ENCODE measurements at regions of chr10 and their contacts with region 1.

Region 1: DNA sequence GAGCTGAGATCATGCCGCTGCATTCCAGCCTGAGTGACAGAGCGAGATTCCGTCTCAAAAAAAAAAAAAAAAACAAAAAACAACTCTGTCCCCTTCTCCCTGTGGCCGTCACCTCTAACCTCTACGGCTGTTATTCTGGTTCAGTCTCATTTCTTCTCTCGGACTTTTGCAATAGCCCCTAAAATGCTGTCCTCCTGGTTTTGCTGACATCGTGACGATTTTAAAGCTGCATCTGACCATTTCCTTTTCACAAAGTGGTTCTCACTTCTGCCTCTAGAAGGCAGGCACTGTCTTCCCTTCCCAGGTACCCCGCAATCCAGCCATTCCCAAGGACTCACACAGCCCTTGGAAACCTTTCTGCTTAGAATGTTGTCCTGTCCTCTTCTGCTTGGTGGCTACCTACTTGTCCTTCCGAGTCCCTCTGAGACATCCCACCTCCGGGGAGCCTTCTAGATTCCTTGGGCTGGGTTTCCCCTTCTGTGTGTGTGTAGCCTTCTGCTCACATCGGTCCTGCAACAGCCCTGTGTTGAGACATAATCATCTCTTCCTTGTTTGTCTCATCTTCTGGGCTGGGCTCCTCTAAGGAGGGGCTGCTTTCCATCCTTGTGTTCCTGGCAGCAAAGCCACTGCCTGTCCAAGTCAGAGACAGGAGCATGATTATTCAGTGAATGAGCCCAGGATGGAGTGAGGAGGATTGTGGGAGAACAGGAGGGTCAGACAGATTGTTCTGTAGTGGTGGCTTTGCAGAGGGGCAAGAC is 83.1 kb downstream of the GRK5 start:
- DNase-seq: peak; percentile 48 to 62
- H3K4me3 ChIP-seq: no peak overlapping the region
- H3K4me3 Mint-ChIP-seq: no peak overlapping the region
- H3K27ac Mint-ChIP-seq: peak overlapping the region; percentile 37
- H3K4me1 ChIP-seq: peaks cover 19% of the 10 kb centered on the region
- H3K4me1 Mint-ChIP-seq: peaks cover 16% of the 10 kb centered on the region
- H3K27me3 ChIP-seq: no peaks in the 10 kb centered on the region
- H3K27me3 Mint-ChIP-seq: no peaks in the 10 kb centered on the region
- CTCF ChIP-seq: no peak

Region 2: GRCh38 chr10:119315128-119316001 is 24.9 kb after region 1 on chr10:
- CTCF ChIA-PET with region 1: no interaction called
- POLR2A ChIA-PET with region 1: interaction called, 6 read pairs
- intact Hi-C with region 1: loop called (anchors 2 kb)
- DNase-seq: peak; percentile 56 to 66
- H3K4me3 ChIP-seq: no peak overlapping the region
- H3K4me3 Mint-ChIP-seq: no peak overlapping the region
- H3K27ac Mint-ChIP-seq: peak overlapping the region; percentile 97
- H3K4me1 ChIP-seq: peaks cover 51% of the 10 kb centered on the region
- H3K4me1 Mint-ChIP-seq: peaks cover 48% of the 10 kb centered on the region
- H3K27me3 ChIP-seq: no peaks in the 10 kb centered on the region
- H3K27me3 Mint-ChIP-seq: no peaks in the 10 kb centered on the region
- CTCF ChIP-seq: no peak

Region 3: DNA sequence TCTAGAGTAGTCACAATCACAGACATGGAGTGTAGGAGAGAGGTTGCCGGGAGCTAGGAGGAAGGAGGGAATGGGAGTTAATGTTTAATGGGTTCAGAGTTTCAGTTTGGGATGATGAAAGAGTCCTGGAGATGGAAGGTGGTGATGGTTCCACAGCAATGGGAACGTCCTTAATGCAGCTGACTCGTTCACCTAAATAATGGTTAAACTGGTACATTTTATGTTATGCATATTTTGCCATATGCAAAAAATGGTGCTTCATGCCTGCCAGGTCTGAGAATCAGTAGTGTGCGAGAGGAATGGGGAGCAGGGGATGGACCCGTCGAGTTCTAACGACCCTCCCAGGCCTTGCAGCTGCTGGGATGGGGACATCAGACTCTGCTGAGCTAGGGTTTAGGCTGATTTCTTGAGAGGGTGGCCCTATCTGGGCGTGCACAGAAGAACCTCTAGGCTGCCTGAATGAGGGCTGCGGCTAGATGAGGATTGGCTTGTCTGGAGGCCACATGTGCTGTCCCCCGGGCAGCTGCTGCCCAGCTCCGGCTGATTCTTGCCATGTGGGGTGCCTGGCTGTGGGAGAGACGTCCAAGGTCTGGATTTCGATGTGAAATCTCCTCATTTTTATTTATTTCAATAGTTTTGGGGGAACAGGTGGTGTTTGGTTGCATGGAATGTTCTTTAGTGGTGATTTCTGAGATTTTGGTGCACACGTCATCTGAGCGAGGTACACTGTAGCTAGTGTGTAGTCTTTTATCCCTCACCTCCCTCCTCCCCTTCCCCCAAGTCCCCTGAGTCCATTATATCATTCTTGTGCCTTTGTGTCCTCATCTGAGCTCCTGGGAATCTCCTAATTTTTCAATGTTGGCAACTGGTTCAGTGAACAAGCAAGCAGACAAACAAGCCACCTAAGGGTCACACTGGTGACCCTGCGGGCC is 32.9 kb after region 1 on chr10:
- CTCF ChIA-PET with region 1: interaction called, 11 read pairs
- POLR2A ChIA-PET with region 1: no interaction called
- intact Hi-C with region 1: no loop called
- DNase-seq: peak in 1 of 2 experiments; percentile 26
- H3K4me3 ChIP-seq: no peak overlapping the region
- H3K4me3 Mint-ChIP-seq: no peak overlapping the region
- H3K27ac Mint-ChIP-seq: peak overlapping the region; percentile 52
- H3K4me1 ChIP-seq: peaks cover 30% of the 10 kb centered on the region
- H3K4me1 Mint-ChIP-seq: peaks cover 31% of the 10 kb centered on the region
- H3K27me3 ChIP-seq: no peaks in the 10 kb centered on the region
- H3K27me3 Mint-ChIP-seq: no peaks in the 10 kb centered on the region
- CTCF ChIP-seq: no peak

Region 4: DNA sequence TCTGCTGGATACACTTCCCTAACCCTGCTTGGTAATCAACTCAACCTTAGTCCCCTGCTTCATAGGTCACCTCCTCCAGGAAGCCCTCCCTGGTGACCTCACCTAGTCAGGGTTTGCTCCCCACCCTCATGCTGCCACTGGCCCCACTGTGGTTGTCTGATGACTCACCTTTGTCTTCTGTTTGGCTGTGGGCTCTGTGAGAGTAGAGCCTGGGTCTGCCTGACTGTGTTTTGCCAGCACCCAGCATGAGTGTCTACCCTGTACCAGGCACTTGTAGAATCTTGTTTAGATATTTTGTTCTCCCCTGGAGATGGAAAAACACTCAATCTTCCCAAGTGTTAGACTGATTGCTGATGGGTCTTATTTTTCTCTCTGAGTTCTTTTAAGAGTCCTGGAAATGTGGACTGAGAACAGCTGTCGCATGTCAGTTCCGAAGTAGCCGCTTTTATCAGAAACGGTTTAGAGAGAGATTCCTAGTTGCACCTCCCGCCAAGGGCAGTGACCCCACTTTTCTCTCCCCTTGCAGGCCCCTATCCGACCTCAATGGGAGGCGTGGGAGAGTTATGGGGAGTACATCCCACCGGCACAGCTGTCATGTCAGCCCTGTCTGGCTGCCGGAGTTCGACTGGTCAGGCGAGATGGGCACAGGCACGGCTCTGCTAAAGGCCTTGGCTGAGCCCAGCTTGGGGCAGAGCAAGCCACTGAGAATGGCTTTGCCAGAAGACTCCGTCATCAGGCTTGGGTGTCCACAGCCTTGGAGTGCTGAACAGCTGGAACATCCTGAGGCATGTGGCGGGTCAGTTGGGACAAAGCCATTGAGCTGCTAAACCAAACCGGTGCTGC is 51.2 kb after region 1 on chr10:
- CTCF ChIA-PET with region 1: no interaction called
- POLR2A ChIA-PET with region 1: no interaction called
- intact Hi-C with region 1: no loop called
- DNase-seq: peak in 1 of 2 experiments; percentile 55
- H3K4me3 ChIP-seq: no peak overlapping the region
- H3K4me3 Mint-ChIP-seq: peak overlapping the region; percentile 17
- H3K27ac Mint-ChIP-seq: peak overlapping the region; percentile 81
- H3K4me1 ChIP-seq: peaks cover 8% of the 10 kb centered on the region
- H3K4me1 Mint-ChIP-seq: peaks cover 11% of the 10 kb centered on the region
- H3K27me3 ChIP-seq: no peaks in the 10 kb centered on the region
- H3K27me3 Mint-ChIP-seq: no peaks in the 10 kb centered on the region
- CTCF ChIP-seq: no peak

Region 5: GRCh38 chr10:119375574-119376272 is 85.3 kb after region 1 on chr10:
- CTCF ChIA-PET with region 1: no interaction called
- POLR2A ChIA-PET with region 1: no interaction called
- intact Hi-C with region 1: loop called (anchors 5 kb)
- DNase-seq: peak; percentile 48 to 54
- H3K4me3 ChIP-seq: no peak overlapping the region
- H3K4me3 Mint-ChIP-seq: no peak overlapping the region
- H3K27ac Mint-ChIP-seq: no peak overlapping the region
- H3K4me1 ChIP-seq: 0 out of 2 replicates have a peak, but pooled peaks cover 4% of the 10 kb centered on the region
- H3K4me1 Mint-ChIP-seq: peaks cover 15% of the 10 kb centered on the region
- H3K27me3 ChIP-seq: no peaks in the 10 kb centered on the region
- H3K27me3 Mint-ChIP-seq: no peaks in the 10 kb centered on the region
- CTCF ChIP-seq: no peak

Region 6: GRCh38 chr10:119416855-119417254 is 126.4 kb after region 1 on chr10:
- CTCF ChIA-PET with region 1: no interaction called
- POLR2A ChIA-PET with region 1: no interaction called
- intact Hi-C with region 1: loop called (anchors 1 kb)
- DNase-seq: peak; percentile 68 to 72
- H3K4me3 ChIP-seq: no peak overlapping the region
- H3K4me3 Mint-ChIP-seq: no peak overlapping the region
- H3K27ac Mint-ChIP-seq: no peak overlapping the region
- H3K4me1 ChIP-seq: peaks cover 28% of the 10 kb centered on the region
- H3K4me1 Mint-ChIP-seq: peaks cover 14% of the 10 kb centered on the region
- H3K27me3 ChIP-seq: no peaks in the 10 kb centered on the region
- H3K27me3 Mint-ChIP-seq: no peaks in the 10 kb centered on the region
- CTCF ChIP-seq: peak; percentile 60 to 79

Region 7: GRCh38 chr10:119489991-119490326 is 199.5 kb after region 1 on chr10:
- CTCF ChIA-PET with region 1: no interaction called
- POLR2A ChIA-PET with region 1: interaction called, 14 read pairs
- intact Hi-C with region 1: no loop called
- DNase-seq: no peak
- H3K4me3 ChIP-seq: no peak overlapping the region
- H3K4me3 Mint-ChIP-seq: no peak overlapping the region
- H3K27ac Mint-ChIP-seq: no peak overlapping the region
- H3K4me1 ChIP-seq: 0 out of 2 replicates have a peak, but pooled peaks cover 5% of the 10 kb centered on the region
- H3K4me1 Mint-ChIP-seq: no peaks in the 10 kb centered on the region
- H3K27me3 ChIP-seq: no peaks in the 10 kb centered on the region
- H3K27me3 Mint-ChIP-seq: no peaks in the 10 kb centered on the region
- CTCF ChIP-seq: peak in 1 of 2 experiments; percentile 15

Measured in Caco-2 (cell line).